ENCODE measurements at regions of chr1 and their contacts with region 1.

Region 1: DNA sequence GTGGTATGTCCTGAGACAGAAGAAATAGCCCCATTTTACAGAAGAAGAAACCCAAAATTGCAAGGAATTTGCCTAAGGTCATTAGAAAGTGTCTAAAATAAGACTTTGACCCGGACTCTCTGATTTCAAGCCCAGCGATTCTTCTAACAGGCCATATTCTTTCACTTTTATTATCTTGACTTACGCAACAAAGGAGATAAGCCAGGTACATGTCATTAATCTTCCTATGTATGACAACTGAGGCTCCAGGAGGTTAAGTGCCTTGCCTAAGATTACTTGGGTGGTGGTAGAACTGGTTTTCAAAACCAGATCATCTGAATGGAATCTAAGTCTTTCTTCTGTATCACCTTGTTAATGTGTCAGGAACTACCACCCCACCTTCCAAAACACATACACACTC is 124.3 kb downstream of the PBX1 start:
- DNase-seq: peak; percentile 55 to 98
- H3K4me3 ChIP-seq: peak overlapping the region; percentile 26; the same call in 1 of the 2 replicates
- H3K27ac ChIP-seq: peak overlapping the region; percentile 97
- H3K4me1 ChIP-seq: peaks cover 55% of the 10 kb centered on the region
- H3K27me3 ChIP-seq: no peaks in the 10 kb centered on the region
- CTCF ChIP-seq: no peak

Region 2: GRCh38 chr1:164611754-164612642 is 71.2 kb before region 1 on chr1:
- CTCF ChIA-PET with region 1: no interaction called
- POLR2A ChIA-PET with region 1: no interaction called
- intact Hi-C with region 1: loop called (anchors 1 kb)
- DNase-seq: peak; percentile 79 to 96
- H3K4me3 ChIP-seq: no peak overlapping the region; the same call in 1 of the 2 replicates
- H3K27ac ChIP-seq: peak overlapping the region; percentile 79
- H3K4me1 ChIP-seq: peaks cover 44% of the 10 kb centered on the region
- H3K27me3 ChIP-seq: no peaks in the 10 kb centered on the region
- CTCF ChIP-seq: no peak

Region 3: GRCh38 chr1:164660412-164660772 is 22.8 kb before region 1 on chr1:
- CTCF ChIA-PET with region 1: no interaction called
- POLR2A ChIA-PET with region 1: no interaction called
- intact Hi-C with region 1: loop called (anchors 1 kb)
- DNase-seq: no peak
- H3K4me3 ChIP-seq: peak overlapping the region; percentile 39; the same call in 1 of the 2 replicates
- H3K27ac ChIP-seq: peak overlapping the region; percentile 99
- H3K4me1 ChIP-seq: peaks cover 81% of the 10 kb centered on the region
- H3K27me3 ChIP-seq: no peaks in the 10 kb centered on the region
- CTCF ChIP-seq: peak; percentile 33; the same call in 1 of the 2 replicates

Region 4: DNA sequence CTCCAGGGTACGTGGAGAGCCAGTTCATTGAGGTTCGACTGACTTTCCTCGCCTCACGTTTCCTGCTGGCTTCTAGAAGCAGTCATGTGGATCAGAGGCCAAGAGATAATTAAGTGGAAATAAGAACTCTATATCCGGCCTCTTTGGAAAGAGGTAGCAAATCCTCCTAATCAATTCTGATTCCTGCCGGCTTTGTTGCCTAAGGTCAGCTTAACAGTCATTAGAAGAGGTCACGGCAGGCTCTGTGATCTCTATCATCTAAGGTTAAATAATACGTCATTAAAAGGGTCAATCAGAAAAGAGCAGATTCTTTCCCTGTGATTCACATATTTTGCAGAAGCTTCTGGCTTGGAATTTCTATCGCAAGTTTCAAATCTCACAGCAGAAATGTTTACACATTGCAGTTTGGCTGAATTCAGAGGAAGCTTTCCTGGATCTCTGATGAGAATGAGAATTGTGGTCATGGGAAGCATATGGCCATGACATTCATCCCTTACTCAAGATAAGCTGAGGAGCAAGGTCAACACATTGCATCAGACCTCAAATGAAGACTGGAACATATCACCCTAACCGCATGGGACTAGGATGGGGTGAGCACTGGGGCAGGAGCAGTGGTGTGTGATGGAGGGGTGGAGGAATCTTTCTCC is 65.1 kb after region 1 on chr1:
- CTCF ChIA-PET with region 1: no interaction called
- POLR2A ChIA-PET with region 1: no interaction called
- intact Hi-C with region 1: loop called (anchors 1 kb)
- DNase-seq: peak; percentile 46 to 97
- H3K4me3 ChIP-seq: peak overlapping the region; percentile 9; the same call in 1 of the 2 replicates
- H3K27ac ChIP-seq: peak overlapping the region; percentile 92
- H3K4me1 ChIP-seq: peaks cover 69% of the 10 kb centered on the region
- H3K27me3 ChIP-seq: no peaks in the 10 kb centered on the region
- CTCF ChIP-seq: no peak

Region 5: DNA sequence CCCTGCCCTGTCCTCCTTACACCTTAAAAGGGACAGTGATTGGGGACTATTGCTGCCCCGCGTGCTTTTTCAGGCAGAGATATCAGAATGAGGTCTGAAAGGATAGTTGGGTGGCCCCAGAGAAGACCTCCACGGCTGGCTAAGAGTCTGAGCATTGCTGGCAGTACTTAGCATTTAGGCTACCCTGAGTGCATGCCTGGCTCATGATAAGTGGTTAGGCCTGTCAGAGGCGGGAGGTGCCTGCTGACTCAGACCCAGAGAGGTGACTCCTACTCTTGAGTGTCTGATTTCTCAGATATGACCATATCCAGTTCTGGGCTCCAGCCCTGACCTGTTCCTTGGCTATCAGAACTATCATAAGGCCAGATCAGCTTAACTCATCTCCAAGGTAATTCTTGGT is 89.4 kb after region 1 on chr1:
- CTCF ChIA-PET with region 1: no interaction called
- POLR2A ChIA-PET with region 1: no interaction called
- intact Hi-C with region 1: loop called (anchors 1 kb)
- DNase-seq: peak; percentile 84 to 96
- H3K4me3 ChIP-seq: peak overlapping the region; percentile 25; the same call in 1 of the 2 replicates
- H3K27ac ChIP-seq: peak overlapping the region; percentile 98
- H3K4me1 ChIP-seq: peaks cover 80% of the 10 kb centered on the region
- H3K27me3 ChIP-seq: no peaks in the 10 kb centered on the region
- CTCF ChIP-seq: no peak

Measured in PC-9 (cell line).